ENCODE measurements at regions of chr9 and their contacts with region 1.

Region 1: GRCh38 chr9:91817493-91818224 is 132.4 kb downstream of the ROR2 start:
- DNase-seq: no peak

Region 2: DNA sequence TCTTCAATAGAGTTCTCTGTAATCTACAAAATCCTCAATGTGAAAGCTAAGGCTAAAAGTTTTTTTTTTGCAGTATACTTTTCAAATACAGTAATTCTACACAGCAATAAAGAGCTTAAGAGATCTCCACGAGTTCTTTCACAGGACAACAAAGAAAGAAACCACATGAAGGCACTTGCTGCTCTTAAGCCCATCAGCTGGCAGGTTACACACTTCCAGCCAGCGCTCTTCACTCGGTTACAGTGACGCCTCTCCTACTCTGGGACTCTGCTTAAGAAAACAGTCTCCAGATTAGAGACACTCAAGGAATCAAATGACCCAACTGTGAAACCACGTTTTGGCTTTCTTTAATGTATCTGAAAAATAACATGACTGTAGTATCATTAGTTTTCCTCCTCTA is 47.4 kb after region 1 on chr9:
- intact Hi-C with region 1: loop called in 1 of 2 experiments (anchors 1 kb)
- DNase-seq: no peak